ENCODE measurements at regions of chr20 and their contacts with region 1.

Region 1: DNA sequence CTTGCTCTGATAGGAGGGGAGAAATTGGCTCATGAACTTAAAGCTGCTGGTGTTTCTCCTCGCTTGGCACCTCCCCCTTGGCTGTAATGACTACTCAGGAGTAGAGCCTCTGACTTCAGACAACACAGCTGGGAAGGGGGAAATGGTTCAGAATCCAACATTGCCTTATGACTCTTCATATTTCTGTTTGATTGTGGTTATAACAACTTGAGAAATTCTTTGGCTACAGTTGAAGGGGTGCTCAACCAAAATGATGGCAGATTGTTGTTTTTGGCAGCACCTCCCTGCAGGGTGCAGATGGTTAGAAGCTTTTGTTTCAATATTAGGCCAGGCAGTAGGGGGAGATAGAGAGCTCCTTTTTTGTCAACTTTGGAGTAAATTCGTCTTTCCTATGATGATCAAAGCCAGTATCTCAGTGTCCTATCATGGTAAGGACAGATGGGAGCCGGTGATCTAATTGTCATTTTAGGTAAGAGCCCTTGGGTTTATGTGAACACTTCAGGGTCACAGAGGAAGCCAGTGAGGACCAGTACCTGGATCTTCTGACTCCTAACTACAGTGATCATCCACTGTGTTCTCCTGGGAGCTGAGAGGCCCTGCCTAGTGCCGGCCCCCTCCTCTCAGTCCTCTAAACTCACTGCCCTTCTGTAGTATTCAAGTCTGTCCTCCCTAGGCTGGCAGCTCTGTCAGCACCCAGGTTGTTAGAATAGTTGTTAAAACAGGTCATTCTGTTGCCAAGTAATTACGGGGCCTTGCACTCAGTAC is 39.9 kb downstream of the RPRD1B start:
- DNase-seq: peak in 1 of 2 experiments; percentile 66
- H3K4me3 ChIP-seq: no peak overlapping the region
- H3K27ac ChIP-seq: no peak overlapping the region
- H3K4me1 ChIP-seq: 0 out of 7 replicates have a peak, but pooled peaks cover 0 to 2% (median 0%) of the 10 kb centered on the region in 4 experiments
- H3K27me3 ChIP-seq: no peaks in the 10 kb centered on the region
- CTCF ChIP-seq: peak in 2 of 3 experiments; percentile 69 to 78; a peak in 3 of 4 replicates
- EP300 ChIP-seq: no peak
- POLR2A ChIP-seq: no peak
- RAD21 ChIP-seq: peak; percentile 49 to 62

Region 2: GRCh38 chr20:38084400-38084951 is 11.0 kb after region 1 on chr20:
- CTCF ChIA-PET with region 1: interaction called, 56 read pairs
- POLR2A ChIA-PET with region 1: no interaction called
- DNase-seq: no peak
- H3K4me3 ChIP-seq: no peak overlapping the region
- H3K27ac ChIP-seq: no peak overlapping the region
- H3K4me1 ChIP-seq: no peaks in the 10 kb centered on the region
- H3K27me3 ChIP-seq: no peaks in the 10 kb centered on the region
- CTCF ChIP-seq: no peak
- EP300 ChIP-seq: no peak
- POLR2A ChIP-seq: no peak
- RAD21 ChIP-seq: no peak

Region 3: GRCh38 chr20:38113401-38114325 is 40.2 kb after region 1 on chr20:
- CTCF ChIA-PET with region 1: interaction called, 22 read pairs
- POLR2A ChIA-PET with region 1: no interaction called
- DNase-seq: peak; percentile 38 to 79
- H3K4me3 ChIP-seq: no peak overlapping the region
- H3K27ac ChIP-seq: no peak overlapping the region
- H3K4me1 ChIP-seq: no peaks in the 10 kb centered on the region
- H3K27me3 ChIP-seq: no peaks in the 10 kb centered on the region
- CTCF ChIP-seq: peak; percentile 66 to 75 (median 74)
- EP300 ChIP-seq: no peak
- POLR2A ChIP-seq: no peak
- RAD21 ChIP-seq: peak; percentile 67 to 79

Region 4: DNA sequence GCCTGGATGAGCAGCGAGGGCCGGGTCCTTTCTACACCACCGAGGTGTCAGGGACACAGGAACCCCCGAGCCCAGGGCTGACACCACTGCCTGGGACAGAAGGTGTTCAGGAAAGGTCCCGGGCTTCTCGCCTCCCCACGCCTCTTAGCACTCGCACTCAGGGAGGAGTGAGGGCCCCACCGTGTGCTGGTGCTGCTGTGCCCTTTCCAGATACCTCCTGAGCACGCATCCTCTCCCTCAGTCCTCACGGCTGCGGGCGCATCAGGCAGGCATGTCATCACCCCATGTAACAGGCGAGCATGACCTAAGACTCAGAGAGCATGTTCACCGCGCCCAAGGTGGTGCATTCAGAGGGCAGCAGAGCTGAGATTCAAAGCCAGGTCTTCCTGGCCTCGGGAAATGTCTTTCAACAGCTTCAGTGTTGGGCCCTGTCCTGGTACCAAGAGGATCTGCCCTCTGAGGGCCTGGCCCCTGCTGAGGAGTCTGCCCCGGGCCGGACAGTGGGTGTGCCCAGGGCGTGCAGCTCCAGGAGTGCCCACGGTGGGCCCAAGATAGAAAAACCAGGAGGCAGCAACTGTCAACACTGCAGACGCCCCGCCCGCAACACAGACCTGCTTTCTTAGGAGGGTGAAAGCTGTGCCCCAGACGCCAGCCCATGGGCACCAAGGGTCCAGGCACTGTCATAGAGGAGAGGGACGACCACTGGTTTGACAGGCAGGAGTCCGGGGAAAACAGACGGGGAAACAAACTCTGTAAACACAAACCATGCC is 62.3 kb after region 1 on chr20:
- CTCF ChIA-PET with region 1: no interaction called
- POLR2A ChIA-PET with region 1: no interaction called
- DNase-seq: no peak
- H3K4me3 ChIP-seq: no peak overlapping the region
- H3K27ac ChIP-seq: no peak overlapping the region
- H3K4me1 ChIP-seq: 0 out of 7 replicates have a peak, but pooled peaks cover 0 to 4% (median 0%) of the 10 kb centered on the region in 4 experiments
- H3K27me3 ChIP-seq: no peaks in the 10 kb centered on the region
- CTCF ChIP-seq: no peak
- EP300 ChIP-seq: no peak
- POLR2A ChIP-seq: no peak
- RAD21 ChIP-seq: no peak

Region 5: GRCh38 chr20:38165089-38165989 is 91.8 kb after region 1 on chr20 and contains the start of gene TGM2:
- CTCF ChIA-PET with region 1: interaction called, 13 read pairs
- POLR2A ChIA-PET with region 1: interaction called, 3 read pairs
- DNase-seq: peak in 1 of 2 experiments; percentile 79
- H3K4me3 ChIP-seq: peak within 1 kb of the TSS; percentile 15 to 58 (median 16); a peak in 5 of 8 replicates
- H3K27ac ChIP-seq: no peak within 1 kb of the TSS
- H3K4me1 ChIP-seq: peaks cover 0 to 2% (median 0%) of the 10 kb centered on the region in 4 experiments; a peak in 1 of 7 replicates
- H3K27me3 ChIP-seq: no peaks in the 10 kb centered on the region; a peak in 2 of 7 replicates
- CTCF ChIP-seq: peak; percentile 73 to 83 (median 82)
- EP300 ChIP-seq: no peak
- POLR2A ChIP-seq: no peak
- RAD21 ChIP-seq: peak; percentile 71 to 79
- total RNA-seq, gene TGM2: 1.0 and 1.3 TPM in 2 replicates

Region 6: DNA sequence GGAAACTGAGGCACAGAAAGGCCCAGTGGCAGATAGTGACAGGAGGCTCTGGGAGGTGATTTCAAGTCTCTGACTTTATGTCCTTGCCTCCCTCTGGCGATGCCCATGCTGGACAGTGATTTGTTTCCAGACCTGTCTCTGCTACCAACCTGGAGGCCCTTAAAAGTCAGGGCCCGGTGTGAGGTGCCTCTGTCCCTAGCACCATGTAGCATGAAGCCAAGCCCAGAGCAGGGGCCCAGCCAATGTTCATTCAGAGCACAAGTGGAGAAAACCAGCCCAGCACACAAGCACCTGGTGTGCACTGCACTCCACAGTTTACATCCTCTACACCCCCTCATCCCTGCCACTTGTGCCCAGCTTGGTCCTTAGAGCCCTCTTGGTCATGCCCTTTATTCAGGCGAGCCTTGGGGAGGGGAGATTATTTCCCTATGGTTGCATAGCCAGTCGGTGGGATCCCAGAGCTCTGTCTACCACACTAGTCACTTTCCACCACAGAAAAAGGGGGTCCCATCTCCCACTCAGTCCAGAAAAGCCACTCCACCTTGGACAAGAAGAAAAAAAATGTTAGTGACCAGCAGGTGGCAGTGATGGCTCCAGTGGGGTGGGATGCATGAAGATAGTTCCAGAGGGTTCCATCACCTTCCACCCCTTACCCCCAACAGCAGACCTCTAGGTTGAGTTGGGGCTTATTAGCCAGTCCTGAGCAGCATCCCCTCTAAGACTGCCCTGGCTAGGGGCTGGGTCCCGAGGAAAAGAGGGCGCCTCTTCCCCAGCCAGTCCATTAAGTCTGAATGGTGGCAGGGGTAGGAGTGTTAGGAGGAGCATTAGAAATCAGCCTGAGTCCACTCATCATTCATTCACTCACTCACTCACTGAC is 156.1 kb after region 1 on chr20:
- CTCF ChIA-PET with region 1: interaction called, 10 read pairs
- POLR2A ChIA-PET with region 1: interaction called, 3 read pairs
- DNase-seq: peak in 1 of 2 experiments; percentile 53
- H3K4me3 ChIP-seq: no peak overlapping the region
- H3K27ac ChIP-seq: no peak overlapping the region
- H3K4me1 ChIP-seq: no peaks in the 10 kb centered on the region
- H3K27me3 ChIP-seq: no peaks in the 10 kb centered on the region
- CTCF ChIP-seq: peak; percentile 50 to 54 (median 51)
- EP300 ChIP-seq: no peak
- POLR2A ChIP-seq: no peak
- RAD21 ChIP-seq: peak; percentile 43 to 57

Measured in H1 (cell line).